SK-N-SH (cell line): ENCODE measurements at regions of chr7 and their contacts with region 1.

Region 1: DNA sequence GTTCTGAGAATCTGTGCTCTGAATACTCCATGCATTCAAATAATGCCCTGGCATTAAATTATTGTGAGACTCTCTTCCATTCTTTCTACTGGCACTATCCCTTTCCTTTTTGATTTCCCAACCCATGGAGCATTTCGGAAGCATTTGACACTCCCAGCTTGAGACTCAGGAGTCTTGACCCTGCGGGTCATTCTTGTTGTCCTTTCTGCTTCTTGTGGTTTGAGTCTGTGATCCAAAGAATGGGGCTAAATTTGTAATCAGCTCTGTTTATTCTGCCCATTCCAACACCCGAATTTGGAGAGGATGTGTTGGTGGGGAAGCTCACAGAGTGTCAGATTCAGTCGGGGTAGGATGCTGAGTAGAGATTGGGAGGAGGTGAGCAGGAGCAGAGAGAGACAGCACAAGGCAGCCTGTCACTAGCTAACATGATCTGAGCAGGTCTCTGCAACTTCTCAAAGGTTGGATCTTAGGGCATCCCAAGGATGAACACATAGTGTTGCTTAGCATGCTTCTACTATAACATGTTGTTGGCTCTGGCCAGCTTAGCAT is 80.4 kb upstream of the BMPER start:
- DNase-seq: no peak
- H3K4me3 ChIP-seq: no peak overlapping the region
- H3K27ac ChIP-seq: no peak overlapping the region
- H3K4me1 ChIP-seq: no peaks in the 10 kb centered on the region
- H3K27me3 ChIP-seq: no peaks in the 10 kb centered on the region
- CTCF ChIP-seq: no peak
- EP300 ChIP-seq: no peak
- RAD21 ChIP-seq: no peak

Region 2: GRCh38 chr7:33807779-33808482 is 17.1 kb before region 1 on chr7:
- CTCF ChIA-PET with region 1: interaction called, 18 read pairs
- POLR2A ChIA-PET with region 1: no interaction called
- DNase-seq: peak; percentile 48
- H3K4me3 ChIP-seq: no peak overlapping the region
- H3K27ac ChIP-seq: peak overlapping the region; percentile 39 to 84; a peak in 3 of 4 replicates
- H3K4me1 ChIP-seq: peaks cover 12 to 35% of the 10 kb centered on the region in 2 experiments
- H3K27me3 ChIP-seq: no peaks in the 10 kb centered on the region
- CTCF ChIP-seq: peak; percentile 77
- EP300 ChIP-seq: peak in 1 of 2 experiments; percentile 80; a peak in 2 of 4 replicates
- RAD21 ChIP-seq: peak; percentile 67